ENCODE measurements at regions of chr2 and their contacts with region 1.

Region 1: DNA sequence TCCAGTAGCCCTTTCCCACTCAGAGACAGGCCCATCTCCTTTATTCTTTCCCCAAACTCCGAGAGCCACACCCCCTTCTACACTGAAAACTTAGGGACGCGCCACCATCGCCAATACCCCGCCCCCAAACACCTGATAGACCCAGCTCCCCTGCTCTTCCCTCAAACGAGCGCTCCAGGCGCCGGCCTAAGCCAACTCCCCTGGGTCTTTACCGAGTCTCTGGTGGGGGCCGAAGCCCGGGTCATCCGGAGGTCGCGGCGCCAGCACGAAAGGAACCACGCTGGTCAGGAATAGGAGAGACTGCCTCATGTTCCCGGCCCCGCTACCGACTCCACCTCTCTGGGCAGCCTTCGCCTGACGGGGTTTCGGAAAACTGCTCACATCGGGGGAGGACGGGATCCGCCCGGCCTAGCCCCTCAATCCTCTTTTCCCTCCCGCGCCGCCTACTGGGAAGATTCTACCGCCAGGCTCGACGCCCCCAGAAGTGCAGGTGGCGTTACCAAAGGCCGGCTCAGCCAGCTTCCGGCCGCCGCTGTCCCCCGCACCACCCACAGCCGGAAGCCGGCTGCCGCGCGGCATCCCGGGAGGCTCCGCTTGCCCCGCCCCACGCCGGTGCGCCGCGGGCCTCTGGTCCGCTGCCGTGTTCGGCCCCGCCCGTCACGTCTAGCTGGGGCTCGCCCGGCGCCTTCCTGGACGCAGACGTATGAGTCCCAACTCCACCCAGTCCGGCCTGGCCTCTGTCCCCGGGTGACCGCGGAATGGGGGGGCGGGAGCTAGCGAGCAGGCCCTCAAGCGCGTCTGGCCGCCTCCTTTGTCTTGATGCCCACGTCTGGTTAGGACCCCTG is at the start of gene ADAM17:
- DNase-seq: peak; percentile 93
- ATAC-seq: peak; percentile 93
- H3K4me3 Mint-ChIP-seq: peak within 1 kb of the TSS; percentile 97
- H3K27ac Mint-ChIP-seq: peak within 1 kb of the TSS; percentile 97
- H3K4me1 Mint-ChIP-seq: peaks cover 65% of the 10 kb centered on the region
- H3K27me3 Mint-ChIP-seq: no peaks in the 10 kb centered on the region
- total RNA-seq, gene ADAM17: 20.0 to 25.5 TPM

Region 2: DNA sequence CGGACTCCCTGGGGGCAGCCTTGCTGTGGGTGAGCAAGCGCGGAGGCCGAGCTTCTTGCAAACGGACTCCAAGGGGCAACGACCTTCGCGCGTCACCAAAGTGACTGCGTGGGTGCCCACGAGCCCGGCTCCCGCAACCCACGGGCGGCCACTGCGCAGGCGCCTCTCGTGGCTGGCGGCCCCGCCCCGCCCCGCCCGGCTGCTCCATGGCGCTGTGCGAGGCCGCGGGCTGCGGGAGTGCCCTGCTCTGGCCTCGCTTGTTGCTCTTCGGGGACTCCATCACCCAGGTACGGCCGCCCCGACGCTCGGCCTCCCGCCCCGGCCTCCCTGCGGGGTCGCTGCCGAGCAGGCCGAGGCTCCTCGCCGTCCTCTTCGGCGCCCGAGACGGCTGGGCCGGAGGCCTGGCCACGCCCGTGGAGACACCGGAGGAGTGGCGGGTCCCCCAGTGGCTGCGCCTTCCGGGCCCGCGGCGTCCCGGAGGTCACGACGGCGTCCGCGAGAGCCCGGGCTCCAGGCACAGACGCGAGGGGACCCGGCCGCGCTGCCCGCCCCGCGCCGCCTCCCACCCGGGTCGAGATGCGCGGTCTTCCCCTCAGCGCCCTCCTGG is 81.1 kb before region 1 on chr2 and contains the start of gene IAH1:
- CTCF ChIA-PET with region 1: interaction called, 14 read pairs
- DNase-seq: peak; percentile 73
- ATAC-seq: peak; percentile 84
- H3K4me3 Mint-ChIP-seq: peak within 1 kb of the TSS; percentile 86
- H3K27ac Mint-ChIP-seq: peak within 1 kb of the TSS; percentile 89
- H3K4me1 Mint-ChIP-seq: peaks cover 46% of the 10 kb centered on the region
- H3K27me3 Mint-ChIP-seq: no peaks in the 10 kb centered on the region
- total RNA-seq, gene IAH1: 71.3 to 72.1 TPM

Region 3: DNA sequence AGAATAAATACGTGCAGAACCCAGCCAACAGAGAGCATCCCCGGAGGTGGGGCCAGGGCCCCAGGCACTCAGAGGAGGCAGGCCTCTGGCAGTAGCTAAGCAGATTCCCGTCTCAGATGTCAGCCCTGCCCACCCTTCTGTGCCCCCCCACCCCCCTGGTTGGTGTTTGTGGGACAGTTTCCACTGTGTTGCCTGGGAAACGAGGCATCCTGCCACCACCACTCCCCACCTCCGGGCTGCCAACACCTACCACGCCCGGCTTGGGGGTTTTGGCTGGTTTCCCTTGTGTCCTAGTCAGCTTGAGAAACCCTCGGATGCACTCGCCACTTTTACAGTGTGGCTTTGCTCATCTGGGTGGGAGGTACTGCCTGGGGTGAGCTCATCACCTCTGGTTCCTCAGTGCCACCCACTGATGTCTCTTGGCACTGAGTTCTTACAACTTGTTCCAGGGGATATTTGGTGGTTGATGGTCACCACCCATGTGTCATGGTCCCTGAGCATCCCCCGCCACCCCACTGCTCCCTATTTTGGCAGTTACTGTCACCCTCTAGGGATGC is 147.6 kb after region 1 on chr2:
- CTCF ChIA-PET with region 1: interaction called, 12 read pairs
- DNase-seq: peak; percentile 96
- ATAC-seq: peak; percentile 94
- H3K4me3 Mint-ChIP-seq: no peak overlapping the region
- H3K27ac Mint-ChIP-seq: peak overlapping the region; percentile 84
- H3K4me1 Mint-ChIP-seq: peaks cover 61% of the 10 kb centered on the region
- H3K27me3 Mint-ChIP-seq: no peaks in the 10 kb centered on the region

Region 4: DNA sequence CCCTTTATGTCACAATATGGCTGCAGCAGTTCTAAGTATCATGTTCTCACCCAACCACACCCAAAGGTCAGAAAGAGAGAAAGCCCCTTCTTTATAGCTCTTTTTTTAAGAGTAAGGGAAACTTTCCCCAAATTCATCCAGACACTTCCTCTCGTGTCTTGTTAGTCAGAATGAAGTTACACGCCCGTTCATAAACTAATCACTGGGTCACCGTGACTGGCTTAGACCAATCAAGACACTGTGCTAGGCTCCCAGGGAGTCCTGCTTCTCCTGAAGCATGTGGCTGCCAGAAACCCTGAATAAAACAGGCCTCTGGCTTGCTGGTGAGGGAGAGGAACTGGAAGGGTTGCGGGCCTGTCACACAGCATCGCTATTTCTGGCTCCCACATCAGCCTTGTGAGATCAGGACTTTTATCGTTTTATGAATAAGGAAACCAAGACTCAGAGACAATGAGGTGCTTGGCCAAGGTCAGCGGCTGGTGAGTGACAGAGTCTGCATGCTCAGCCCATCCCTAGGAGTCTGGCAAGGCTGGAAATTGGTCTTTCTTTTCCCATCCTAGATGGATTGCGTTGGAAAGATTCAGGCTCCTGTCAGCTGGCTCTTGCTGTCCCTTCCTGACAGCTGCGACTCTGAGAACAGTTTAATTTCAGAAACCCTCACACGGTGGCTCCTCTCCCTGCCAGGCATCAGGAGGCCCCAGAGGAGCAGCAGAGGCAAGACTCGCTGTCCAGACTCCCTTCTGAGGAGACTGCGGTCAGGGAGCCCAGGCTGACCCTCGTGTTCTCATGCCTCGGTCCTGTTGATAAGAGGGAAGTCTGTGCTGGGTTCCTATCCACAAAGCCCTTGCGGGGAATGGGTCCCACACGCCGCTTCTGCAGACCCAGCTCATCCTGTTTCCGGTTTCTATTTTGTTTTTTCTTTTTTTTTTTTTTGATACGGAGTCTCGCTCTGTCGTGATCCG is 183.3 kb after region 1 on chr2:
- CTCF ChIA-PET with region 1: interaction called, 10 read pairs
- DNase-seq: no peak
- ATAC-seq: peak; percentile 5
- H3K4me3 Mint-ChIP-seq: peak overlapping the region; percentile 47
- H3K27ac Mint-ChIP-seq: peak overlapping the region; percentile 89
- H3K4me1 Mint-ChIP-seq: peaks cover 44% of the 10 kb centered on the region
- H3K27me3 Mint-ChIP-seq: peaks cover 2% of the 10 kb centered on the region